ENCODE measurements at regions of chr2 and their contacts with region 1.

Region 1: DNA sequence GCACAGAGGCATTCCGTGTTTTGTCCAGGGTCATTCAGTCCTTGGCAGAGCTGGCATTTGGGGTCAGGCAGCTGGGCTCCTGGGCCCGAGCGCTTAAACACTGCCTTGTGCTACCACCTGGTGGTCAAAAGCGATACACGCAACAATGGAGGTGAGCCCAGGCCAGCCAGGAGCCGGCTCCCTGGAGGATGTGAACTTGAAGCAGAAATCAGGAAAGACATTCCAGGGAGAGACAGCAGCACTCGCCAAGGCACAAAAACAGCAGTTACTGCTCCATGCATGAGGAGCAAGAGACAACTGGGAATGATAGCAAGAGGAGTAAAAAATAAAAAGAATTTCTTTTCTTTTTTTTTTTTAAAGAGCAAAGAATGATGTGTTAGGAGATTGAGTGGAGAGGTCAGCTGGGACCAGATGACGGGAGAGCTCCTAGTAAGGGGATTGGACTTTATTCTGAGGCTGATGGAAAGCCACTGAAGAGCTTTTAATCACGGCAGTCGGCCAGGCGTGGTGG is 20.7 kb downstream of the SCYGR8 start:
- DNase-seq: peak; percentile 13 to 60 (median 45)
- ATAC-seq: peak; percentile 84
- H3K4me3 ChIP-seq: no peak overlapping the region
- H3K4me3 Mint-ChIP-seq: no peak overlapping the region
- H3K27ac ChIP-seq: no peak overlapping the region
- H3K27ac Mint-ChIP-seq: no peak overlapping the region
- H3K4me1 ChIP-seq: no peaks in the 10 kb centered on the region
- H3K4me1 Mint-ChIP-seq: peaks cover 0 to 3% (median 0%) of the 10 kb centered on the region in 7 donors
- H3K27me3 ChIP-seq: no peaks in the 10 kb centered on the region
- H3K27me3 Mint-ChIP-seq: peaks cover 0 to 5% (median 4%) of the 10 kb centered on the region in 5 donors

Region 2: DNA sequence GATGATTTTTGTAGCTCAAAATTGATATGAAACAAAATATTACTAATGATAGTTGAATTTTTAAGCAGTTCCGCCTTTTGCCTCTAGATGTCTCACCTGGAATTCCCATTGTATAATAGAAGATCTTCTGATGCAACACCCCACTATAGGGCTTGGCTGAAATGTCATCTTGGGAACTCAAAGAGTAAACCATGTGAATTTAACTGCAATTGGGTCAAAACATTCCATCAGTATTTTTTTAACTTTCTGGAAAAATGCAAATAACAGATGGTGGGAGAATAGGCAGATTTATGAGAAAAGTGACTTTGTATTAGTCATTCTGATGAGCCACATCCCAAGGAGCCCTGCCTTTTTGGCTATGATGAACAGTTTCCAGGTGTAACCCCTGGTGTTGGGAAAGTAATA is 1877.0 kb before region 1 on chr2:
- CTCF ChIA-PET with region 1: no interaction called
- POLR2A ChIA-PET with region 1: no interaction called
- intact Hi-C with region 1: loop called in 1 of 2 experiments (anchors 5 kb)
- DNase-seq: peak in 4 of 9 donors; percentile 4 to 16 (median 15)
- ATAC-seq: peak; percentile 50
- H3K4me3 ChIP-seq: no peak overlapping the region
- H3K4me3 Mint-ChIP-seq: no peak overlapping the region
- H3K27ac ChIP-seq: no peak overlapping the region
- H3K27ac Mint-ChIP-seq: no peak overlapping the region
- H3K4me1 ChIP-seq: no peaks in the 10 kb centered on the region
- H3K4me1 Mint-ChIP-seq: no peaks in the 10 kb centered on the region
- H3K27me3 ChIP-seq: no peaks in the 10 kb centered on the region
- H3K27me3 Mint-ChIP-seq: peaks cover 0 to 15% (median 4%) of the 10 kb centered on the region in 5 donors

Region 3: DNA sequence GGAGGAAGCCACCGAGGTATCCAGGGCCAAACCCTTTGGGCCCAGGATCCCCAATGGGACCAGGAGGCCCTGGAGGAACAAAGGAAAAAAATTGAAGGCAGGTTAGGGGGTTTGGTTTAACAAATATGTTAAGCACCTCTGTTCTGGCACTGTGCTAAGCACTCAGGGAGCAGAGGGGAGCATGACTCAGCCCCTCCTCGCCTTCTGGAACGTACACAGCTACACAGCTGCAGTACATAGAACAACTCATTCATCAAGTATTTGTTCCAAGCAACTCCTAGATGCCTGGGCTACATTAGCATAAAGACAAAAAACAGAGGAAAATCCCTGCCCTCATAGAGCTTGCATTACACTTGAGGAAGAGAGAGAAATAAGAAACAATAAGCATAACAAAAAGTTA is 756.0 kb before region 1 on chr2:
- CTCF ChIA-PET with region 1: no interaction called
- POLR2A ChIA-PET with region 1: no interaction called
- intact Hi-C with region 1: no loop called
- DNase-seq: no peak
- ATAC-seq: no peak
- H3K4me3 ChIP-seq: no peak overlapping the region
- H3K4me3 Mint-ChIP-seq: no peak overlapping the region
- H3K27ac ChIP-seq: no peak overlapping the region
- H3K27ac Mint-ChIP-seq: peak overlapping the region in 1 of 9 donors; percentile 38
- H3K4me1 ChIP-seq: no peaks in the 10 kb centered on the region
- H3K4me1 Mint-ChIP-seq: no peaks in the 10 kb centered on the region
- H3K27me3 ChIP-seq: no peaks in the 10 kb centered on the region
- H3K27me3 Mint-ChIP-seq: peaks cover 0 to 8% (median 0%) of the 10 kb centered on the region in 5 donors

Region 4: GRCh38 chr2:227238238-227239237 is 527.9 kb before region 1 on chr2:
- CTCF ChIA-PET with region 1: interaction called, 4 read pairs
- POLR2A ChIA-PET with region 1: no interaction called
- intact Hi-C with region 1: loop called in 1 of 2 experiments (anchors 2 kb)
- DNase-seq: peak; percentile 2 to 58 (median 41)
- ATAC-seq: peak; percentile 47
- H3K4me3 ChIP-seq: no peak overlapping the region
- H3K4me3 Mint-ChIP-seq: no peak overlapping the region
- H3K27ac ChIP-seq: no peak overlapping the region
- H3K27ac Mint-ChIP-seq: no peak overlapping the region
- H3K4me1 ChIP-seq: no peaks in the 10 kb centered on the region
- H3K4me1 Mint-ChIP-seq: no peaks in the 10 kb centered on the region
- H3K27me3 ChIP-seq: no peaks in the 10 kb centered on the region
- H3K27me3 Mint-ChIP-seq: peaks cover 5 to 16% (median 13%) of the 10 kb centered on the region in 5 donors

Region 5: GRCh38 chr2:227471924-227472264 is 294.5 kb before region 1 on chr2 and contains the start of gene AGFG1:
- CTCF ChIA-PET with region 1: interaction called, 4 read pairs
- POLR2A ChIA-PET with region 1: no interaction called
- intact Hi-C with region 1: loop called in 1 of 2 experiments (anchors 2 kb)
- DNase-seq: peak; percentile 71 to 90 (median 81)
- ATAC-seq: peak; percentile 97
- H3K4me3 ChIP-seq: peak within 1 kb of the TSS; percentile 55
- H3K4me3 Mint-ChIP-seq: peak within 1 kb of the TSS; percentile 86 to 96 (median 93)
- H3K27ac ChIP-seq: peak within 1 kb of the TSS; percentile 80
- H3K27ac Mint-ChIP-seq: peak within 1 kb of the TSS; percentile 77 to 94 (median 86)
- H3K4me1 ChIP-seq: peaks cover 30 to 40% of the 10 kb centered on the region in 2 donors
- H3K4me1 Mint-ChIP-seq: peaks cover 33 to 65% (median 60%) of the 10 kb centered on the region in 7 donors
- H3K27me3 ChIP-seq: no peaks in the 10 kb centered on the region
- H3K27me3 Mint-ChIP-seq: no peaks in the 10 kb centered on the region
- total RNA-seq, gene AGFG1: 52.8 to 84.5 (median 58.2) TPM

Region 6: DNA sequence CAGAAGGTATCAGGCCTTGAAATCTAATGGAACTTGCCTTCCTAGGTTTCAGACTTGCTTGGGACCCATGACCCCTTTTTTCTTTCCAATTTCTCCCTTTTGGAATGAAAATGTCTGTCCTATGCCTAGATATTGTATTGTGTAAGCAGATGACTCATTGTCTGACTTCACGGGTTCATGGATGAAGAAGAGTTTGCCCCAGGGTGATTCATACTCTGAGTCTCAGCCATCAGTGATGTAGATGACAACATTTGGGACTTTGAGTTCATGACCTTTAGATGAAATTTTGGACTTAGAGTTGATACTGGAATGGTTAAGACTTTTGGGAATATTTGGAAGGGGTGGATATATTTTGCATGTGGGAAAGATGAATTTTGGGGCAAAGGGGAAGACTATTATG is 111.0 kb before region 1 on chr2:
- CTCF ChIA-PET with region 1: interaction called, 5 read pairs
- POLR2A ChIA-PET with region 1: no interaction called
- intact Hi-C with region 1: loop called (anchors 1 kb)
- DNase-seq: no peak
- ATAC-seq: no peak
- H3K4me3 ChIP-seq: no peak overlapping the region
- H3K4me3 Mint-ChIP-seq: no peak overlapping the region
- H3K27ac ChIP-seq: no peak overlapping the region
- H3K27ac Mint-ChIP-seq: no peak overlapping the region
- H3K4me1 ChIP-seq: no peaks in the 10 kb centered on the region
- H3K4me1 Mint-ChIP-seq: no peaks in the 10 kb centered on the region
- H3K27me3 ChIP-seq: no peaks in the 10 kb centered on the region
- H3K27me3 Mint-ChIP-seq: peaks cover 0 to 12% (median 4%) of the 10 kb centered on the region in 5 donors

Region 7: GRCh38 chr2:227748079-227748478 is 18.3 kb before region 1 on chr2:
- CTCF ChIA-PET with region 1: no interaction called
- POLR2A ChIA-PET with region 1: no interaction called
- intact Hi-C with region 1: no loop called
- DNase-seq: no peak
- ATAC-seq: no peak
- H3K4me3 ChIP-seq: no peak overlapping the region
- H3K4me3 Mint-ChIP-seq: no peak overlapping the region
- H3K27ac ChIP-seq: no peak overlapping the region
- H3K27ac Mint-ChIP-seq: no peak overlapping the region
- H3K4me1 ChIP-seq: no peaks in the 10 kb centered on the region
- H3K4me1 Mint-ChIP-seq: no peaks in the 10 kb centered on the region
- H3K27me3 ChIP-seq: no peaks in the 10 kb centered on the region
- H3K27me3 Mint-ChIP-seq: peaks cover 0 to 17% (median 5%) of the 10 kb centered on the region in 5 donors

Region 8: GRCh38 chr2:228102949-228103348 is 336.5 kb after region 1 on chr2:
- CTCF ChIA-PET with region 1: no interaction called
- POLR2A ChIA-PET with region 1: no interaction called
- intact Hi-C with region 1: no loop called
- DNase-seq: no peak
- ATAC-seq: no peak
- H3K4me3 ChIP-seq: no peak overlapping the region
- H3K4me3 Mint-ChIP-seq: no peak overlapping the region
- H3K27ac ChIP-seq: no peak overlapping the region
- H3K27ac Mint-ChIP-seq: no peak overlapping the region
- H3K4me1 ChIP-seq: no peaks in the 10 kb centered on the region
- H3K4me1 Mint-ChIP-seq: no peaks in the 10 kb centered on the region
- H3K27me3 ChIP-seq: no peaks in the 10 kb centered on the region
- H3K27me3 Mint-ChIP-seq: no peaks in the 10 kb centered on the region

Region 9: DNA sequence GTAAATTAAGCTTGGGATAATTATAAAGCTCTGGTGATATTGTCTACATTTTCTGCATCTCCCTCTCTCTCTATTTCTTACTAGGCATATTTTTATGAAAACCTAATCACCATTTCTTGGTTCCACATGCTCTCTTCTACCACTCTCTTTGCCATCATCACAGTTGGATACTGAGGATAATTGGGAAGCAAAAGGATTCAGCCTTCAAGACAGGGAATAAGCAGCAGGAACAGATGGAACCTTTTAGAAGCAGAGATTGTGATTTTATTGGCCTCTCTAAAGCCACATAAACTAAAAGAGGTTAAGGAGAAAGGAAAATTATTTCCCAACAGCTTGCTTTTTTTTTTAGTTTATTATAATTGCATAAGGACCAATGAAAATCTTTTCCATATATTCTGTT is 641.4 kb after region 1 on chr2:
- CTCF ChIA-PET with region 1: no interaction called
- POLR2A ChIA-PET with region 1: no interaction called
- intact Hi-C with region 1: no loop called
- DNase-seq: no peak
- ATAC-seq: no peak
- H3K4me3 ChIP-seq: no peak overlapping the region
- H3K4me3 Mint-ChIP-seq: no peak overlapping the region
- H3K27ac ChIP-seq: no peak overlapping the region
- H3K27ac Mint-ChIP-seq: no peak overlapping the region
- H3K4me1 ChIP-seq: no peaks in the 10 kb centered on the region
- H3K4me1 Mint-ChIP-seq: no peaks in the 10 kb centered on the region
- H3K27me3 ChIP-seq: no peaks in the 10 kb centered on the region
- H3K27me3 Mint-ChIP-seq: no peaks in the 10 kb centered on the region